Activated CD8-positive, alpha-beta T cell treated with anti-CD3 and anti-CD28 coated beads for 36 hours (primary cell): ENCODE measurements at regions of chr16 and their contacts with region 1.

Region 1: DNA sequence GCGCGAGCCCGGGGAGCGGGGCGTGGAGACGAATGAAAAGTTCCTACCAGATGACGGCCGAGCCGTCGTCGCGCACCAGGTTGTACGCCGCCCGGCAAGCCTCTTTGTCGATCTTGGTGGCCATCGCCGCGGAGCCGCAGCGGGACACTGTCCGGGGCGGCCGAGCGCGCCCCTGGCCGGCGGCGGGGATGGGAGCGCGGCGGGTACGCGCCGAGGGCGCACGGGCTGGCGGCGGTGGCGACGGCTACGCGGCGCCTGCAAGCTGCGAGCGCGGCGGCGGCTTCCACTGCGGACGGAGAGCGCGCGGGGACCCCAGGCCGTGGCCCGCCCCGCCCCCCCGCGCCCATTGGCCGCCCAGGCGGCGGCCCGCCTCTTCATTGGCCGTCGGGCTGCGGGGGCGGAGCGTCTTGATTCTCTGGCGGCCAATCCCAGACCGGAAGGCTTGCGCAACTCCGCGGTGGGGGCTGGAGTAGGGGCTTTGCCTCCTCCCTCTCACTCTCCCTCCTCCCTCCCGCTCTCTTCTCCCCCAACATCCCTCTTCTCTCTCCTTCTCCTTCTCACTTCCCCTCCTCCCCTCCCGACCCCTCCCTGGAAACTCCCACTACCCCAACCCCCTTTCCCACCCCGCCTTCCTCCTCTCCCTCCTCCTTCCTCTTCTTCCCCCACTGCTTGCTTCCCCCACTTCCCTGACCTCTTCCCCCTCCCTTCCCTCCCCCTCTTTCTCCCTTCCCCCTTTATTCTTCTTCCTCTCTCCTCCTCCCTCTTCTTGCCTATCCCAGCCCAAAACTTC is at the start of gene COTL1:
- DNase-seq: peak; percentile 99
- ATAC-seq: peak; percentile 82
- H3K4me3 Mint-ChIP-seq: peak within 1 kb of the TSS; percentile 97
- H3K27ac Mint-ChIP-seq: peak within 1 kb of the TSS; percentile 86
- H3K4me1 Mint-ChIP-seq: peaks cover 36% of the 10 kb centered on the region
- H3K27me3 Mint-ChIP-seq: no peaks in the 10 kb centered on the region
- CTCF ChIP-seq: no peak
- total RNA-seq, gene COTL1: 664 to 677 TPM

Region 2: DNA sequence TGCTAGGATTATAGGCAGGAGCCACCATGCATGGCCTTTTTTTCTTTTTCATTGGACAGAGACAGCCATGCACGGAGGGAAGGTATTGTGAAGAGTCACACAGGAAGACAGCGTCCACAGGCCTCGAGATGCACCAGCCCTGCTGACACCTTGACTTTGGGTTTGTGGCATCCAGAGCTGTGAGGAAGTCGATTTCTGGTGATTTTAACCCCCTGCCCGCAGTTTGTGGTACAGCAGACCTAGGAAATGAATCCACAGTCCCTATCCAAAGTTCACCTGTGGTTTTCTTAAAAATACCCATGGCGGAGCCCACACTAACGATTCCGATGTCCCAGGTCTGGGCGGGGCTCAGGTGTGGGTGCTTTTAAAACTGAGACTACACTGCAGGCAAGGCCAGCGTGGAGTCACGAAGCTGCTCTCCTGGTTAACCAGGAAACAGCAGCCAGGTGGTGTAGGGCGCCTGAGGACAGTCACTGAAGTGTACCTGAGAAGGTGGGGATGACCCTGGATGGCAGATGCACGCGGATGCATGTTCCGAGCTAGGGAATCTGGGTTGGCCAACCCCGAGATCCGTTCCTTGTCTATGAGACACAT is 99.1 kb before region 1 on chr16:
- CTCF ChIA-PET with region 1: interaction called, 145 read pairs
- POLR2A ChIA-PET with region 1: interaction called, 17 read pairs
- intact Hi-C with region 1: no loop called
- DNase-seq: peak; percentile 90
- ATAC-seq: peak; percentile 59
- H3K4me3 Mint-ChIP-seq: peak overlapping the region; percentile 57
- H3K27ac Mint-ChIP-seq: peak overlapping the region; percentile 89
- H3K4me1 Mint-ChIP-seq: peaks cover 64% of the 10 kb centered on the region
- H3K27me3 Mint-ChIP-seq: no peaks in the 10 kb centered on the region
- CTCF ChIP-seq: peak; percentile 30

Region 3: DNA sequence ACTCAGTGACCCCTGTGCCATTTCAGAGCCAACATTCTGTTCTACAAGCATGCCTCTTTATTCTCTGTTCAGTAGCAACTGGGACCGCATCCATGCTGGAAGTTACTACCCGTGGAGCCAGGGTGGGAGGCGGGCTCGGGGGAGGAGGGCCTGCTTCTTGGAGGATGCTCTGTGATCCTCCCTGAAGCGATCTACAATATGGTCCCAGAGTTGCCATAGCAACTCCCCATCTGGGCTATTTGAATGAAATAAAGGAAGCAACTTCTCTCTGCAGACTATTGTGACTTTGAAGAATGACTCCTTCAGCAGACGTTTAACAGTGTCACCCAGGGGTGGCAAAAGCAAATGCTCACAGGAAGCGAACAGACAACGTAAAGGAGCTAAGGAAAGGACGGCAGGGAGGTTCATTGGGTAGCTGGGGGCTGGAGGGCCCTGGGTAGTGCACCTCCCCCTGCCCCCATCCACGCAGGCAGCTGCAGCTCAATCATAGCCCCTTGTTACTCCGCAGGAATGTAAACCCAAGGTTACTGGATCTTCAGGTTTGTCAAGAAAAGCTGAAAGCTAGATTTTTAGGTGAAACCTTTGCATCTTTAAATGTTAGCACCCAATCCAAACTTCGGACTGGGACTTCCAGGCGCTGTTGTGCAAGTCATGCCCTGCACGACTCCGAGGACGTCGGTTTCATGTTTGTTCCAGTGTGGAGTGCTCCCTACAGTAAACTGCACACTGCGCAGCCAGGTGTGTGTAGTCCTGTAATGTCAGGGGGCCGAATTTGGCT is 62.4 kb before region 1 on chr16:
- CTCF ChIA-PET with region 1: interaction called, 14 read pairs
- POLR2A ChIA-PET with region 1: interaction called, 3 read pairs
- intact Hi-C with region 1: loop called (anchors 5 kb)
- DNase-seq: no peak
- ATAC-seq: no peak
- H3K4me3 Mint-ChIP-seq: no peak overlapping the region
- H3K27ac Mint-ChIP-seq: no peak overlapping the region
- H3K4me1 Mint-ChIP-seq: peaks cover 29% of the 10 kb centered on the region
- H3K27me3 Mint-ChIP-seq: no peaks in the 10 kb centered on the region
- CTCF ChIP-seq: no peak

Region 4: DNA sequence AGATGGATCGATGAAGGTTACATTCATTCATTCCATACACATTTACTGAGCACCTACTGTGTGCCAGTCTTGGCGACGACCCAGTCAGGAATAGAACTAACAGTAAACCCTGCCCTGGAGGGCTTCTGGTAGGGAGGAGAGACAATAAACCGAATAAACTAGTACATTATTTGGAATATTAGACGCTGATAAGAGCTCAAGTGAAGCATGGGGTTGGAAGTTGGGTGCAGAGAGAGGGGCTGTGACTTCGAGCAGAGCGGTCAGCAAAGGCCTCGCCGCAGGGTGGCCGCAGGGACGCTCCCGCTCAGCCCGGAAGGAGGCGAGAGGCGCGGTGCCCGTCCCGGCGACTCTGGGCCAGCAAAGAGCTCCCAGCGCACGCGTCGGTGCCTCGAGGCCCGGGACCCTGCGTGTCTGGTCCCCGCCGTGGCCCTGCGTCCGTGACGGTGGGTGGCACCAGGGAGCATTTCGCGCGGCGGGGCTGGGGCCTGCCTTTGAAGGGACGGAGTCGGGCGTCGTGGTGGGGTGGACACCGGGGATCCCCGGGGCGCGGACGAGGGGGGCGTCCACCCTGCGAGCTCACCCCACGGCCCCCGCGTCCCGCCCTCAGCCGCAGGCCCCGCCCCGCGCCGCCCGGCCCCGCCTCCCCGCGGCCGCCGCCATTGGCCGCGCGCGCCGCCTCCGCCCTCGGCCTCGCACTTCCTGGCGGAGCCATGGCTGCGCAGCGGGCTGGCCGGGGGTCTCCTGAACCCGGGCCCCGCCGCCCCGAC is 30.0 kb after region 1 on chr16 and contains the start of gene KLHL36:
- CTCF ChIA-PET with region 1: interaction called, 47 read pairs
- POLR2A ChIA-PET with region 1: interaction called, 3 read pairs
- intact Hi-C with region 1: no loop called
- DNase-seq: peak; percentile 67
- ATAC-seq: peak; percentile 89
- H3K4me3 Mint-ChIP-seq: peak within 1 kb of the TSS; percentile 77
- H3K27ac Mint-ChIP-seq: peak within 1 kb of the TSS; percentile 83
- H3K4me1 Mint-ChIP-seq: peaks cover 35% of the 10 kb centered on the region
- H3K27me3 Mint-ChIP-seq: peaks cover 2% of the 10 kb centered on the region
- CTCF ChIP-seq: no peak
- total RNA-seq, gene KLHL36: 41.0 to 44.0 TPM

Region 5: GRCh38 chr16:84699712-84700445 is 81.9 kb after region 1 on chr16 and contains the start of gene USP10:
- CTCF ChIA-PET with region 1: interaction called, 10 read pairs
- POLR2A ChIA-PET with region 1: no interaction called
- intact Hi-C with region 1: no loop called
- DNase-seq: peak; percentile 85
- ATAC-seq: peak; percentile 84
- H3K4me3 Mint-ChIP-seq: peak within 1 kb of the TSS; percentile 98
- H3K27ac Mint-ChIP-seq: peak within 1 kb of the TSS; percentile 96
- H3K4me1 Mint-ChIP-seq: peaks cover 36% of the 10 kb centered on the region
- H3K27me3 Mint-ChIP-seq: no peaks in the 10 kb centered on the region
- CTCF ChIP-seq: no peak
- total RNA-seq, gene USP10: 116 TPM

Region 6: GRCh38 chr16:84841770-84842300 is 223.8 kb after region 1 on chr16:
- CTCF ChIA-PET with region 1: no interaction called
- POLR2A ChIA-PET with region 1: no interaction called
- intact Hi-C with region 1: no loop called
- DNase-seq: peak; percentile 10
- ATAC-seq: no peak
- H3K4me3 Mint-ChIP-seq: no peak overlapping the region
- H3K27ac Mint-ChIP-seq: no peak overlapping the region
- H3K4me1 Mint-ChIP-seq: peaks cover 7% of the 10 kb centered on the region
- H3K27me3 Mint-ChIP-seq: peaks cover 21% of the 10 kb centered on the region
- CTCF ChIP-seq: no peak

Region 7: DNA sequence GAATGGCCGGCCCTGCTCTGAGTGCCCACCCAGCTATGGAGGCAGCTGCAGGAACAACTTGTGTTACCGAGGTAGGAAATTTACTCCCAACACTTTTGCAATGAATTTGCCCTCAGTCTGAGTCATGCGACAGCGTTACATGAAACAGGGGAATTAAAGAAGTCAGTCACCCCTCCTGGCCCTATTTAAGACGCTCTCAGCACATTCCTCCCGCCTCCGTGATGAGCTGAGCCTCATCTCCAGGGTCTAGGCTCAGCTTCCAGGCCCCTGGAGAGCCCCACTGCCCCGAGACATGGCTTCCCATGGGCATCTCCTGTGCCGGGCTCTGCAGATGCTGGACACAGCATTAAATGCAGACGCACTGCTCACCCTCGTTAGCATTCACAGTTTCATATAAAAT is 236.8 kb after region 1 on chr16:
- CTCF ChIA-PET with region 1: no interaction called
- POLR2A ChIA-PET with region 1: no interaction called
- intact Hi-C with region 1: no loop called
- DNase-seq: no peak
- ATAC-seq: no peak
- H3K4me3 Mint-ChIP-seq: no peak overlapping the region
- H3K27ac Mint-ChIP-seq: no peak overlapping the region
- H3K4me1 Mint-ChIP-seq: no peaks in the 10 kb centered on the region
- H3K27me3 Mint-ChIP-seq: peaks cover 2% of the 10 kb centered on the region
- CTCF ChIP-seq: no peak

Region 8: GRCh38 chr16:84970447-84971127 is 352.6 kb after region 1 on chr16:
- CTCF ChIA-PET with region 1: interaction called, 13 read pairs
- POLR2A ChIA-PET with region 1: no interaction called
- intact Hi-C with region 1: loop called (anchors 10 kb)
- DNase-seq: peak; percentile 85
- ATAC-seq: peak; percentile 98
- H3K4me3 Mint-ChIP-seq: no peak overlapping the region
- H3K27ac Mint-ChIP-seq: no peak overlapping the region
- H3K4me1 Mint-ChIP-seq: peaks cover 4% of the 10 kb centered on the region
- H3K27me3 Mint-ChIP-seq: peaks cover 1% of the 10 kb centered on the region
- CTCF ChIP-seq: peak; percentile 88